SK-N-SH (cell line): ENCODE measurements at regions of chr1 and their contacts with region 1.

Region 1: GRCh38 chr1:109773146-109773899 is 9.6 kb upstream of the EPS8L3 start:
- DNase-seq: peak; percentile 86
- H3K4me3 ChIP-seq: no peak overlapping the region; a peak in 1 of 4 replicates
- H3K27ac ChIP-seq: no peak overlapping the region
- H3K4me1 ChIP-seq: peaks cover 0 to 19% of the 10 kb centered on the region in 2 experiments; a peak in 1 of 4 replicates
- H3K27me3 ChIP-seq: no peaks in the 10 kb centered on the region
- CTCF ChIP-seq: peak; percentile 92
- EP300 ChIP-seq: no peak
- RAD21 ChIP-seq: peak; percentile 98

Region 2: GRCh38 chr1:109548321-109549267 is 224.7 kb before region 1 on chr1 and contains the start of gene GNAI3:
- CTCF ChIA-PET with region 1: interaction called, 140 read pairs
- POLR2A ChIA-PET with region 1: interaction called, 15 read pairs
- DNase-seq: peak; percentile 90
- H3K4me3 ChIP-seq: peak within 1 kb of the TSS; percentile 80 to 88
- H3K27ac ChIP-seq: peak within 1 kb of the TSS; percentile 88 to 93
- H3K4me1 ChIP-seq: peaks cover 3 to 20% of the 10 kb centered on the region in 2 experiments; a peak in 3 of 4 replicates
- H3K27me3 ChIP-seq: no peaks in the 10 kb centered on the region
- CTCF ChIP-seq: no peak
- EP300 ChIP-seq: peak in 1 of 2 experiments; percentile 33; a peak in 1 of 4 replicates
- RAD21 ChIP-seq: no peak; the same call in 1 of the 2 replicates
- polyA plus RNA-seq, gene GNAI3: 4.0 and 4.8 TPM in 2 replicates

Region 3: GRCh38 chr1:109750241-109750882 is 23.0 kb before region 1 on chr1:
- CTCF ChIA-PET with region 1: interaction called, 10 read pairs
- POLR2A ChIA-PET with region 1: no interaction called
- DNase-seq: no peak
- H3K4me3 ChIP-seq: no peak overlapping the region
- H3K27ac ChIP-seq: no peak overlapping the region
- H3K4me1 ChIP-seq: no peaks in the 10 kb centered on the region
- H3K27me3 ChIP-seq: peaks cover 10% of the 10 kb centered on the region; the same call in 1 of the 2 replicates
- CTCF ChIP-seq: no peak
- EP300 ChIP-seq: no peak
- RAD21 ChIP-seq: no peak

Region 4: DNA sequence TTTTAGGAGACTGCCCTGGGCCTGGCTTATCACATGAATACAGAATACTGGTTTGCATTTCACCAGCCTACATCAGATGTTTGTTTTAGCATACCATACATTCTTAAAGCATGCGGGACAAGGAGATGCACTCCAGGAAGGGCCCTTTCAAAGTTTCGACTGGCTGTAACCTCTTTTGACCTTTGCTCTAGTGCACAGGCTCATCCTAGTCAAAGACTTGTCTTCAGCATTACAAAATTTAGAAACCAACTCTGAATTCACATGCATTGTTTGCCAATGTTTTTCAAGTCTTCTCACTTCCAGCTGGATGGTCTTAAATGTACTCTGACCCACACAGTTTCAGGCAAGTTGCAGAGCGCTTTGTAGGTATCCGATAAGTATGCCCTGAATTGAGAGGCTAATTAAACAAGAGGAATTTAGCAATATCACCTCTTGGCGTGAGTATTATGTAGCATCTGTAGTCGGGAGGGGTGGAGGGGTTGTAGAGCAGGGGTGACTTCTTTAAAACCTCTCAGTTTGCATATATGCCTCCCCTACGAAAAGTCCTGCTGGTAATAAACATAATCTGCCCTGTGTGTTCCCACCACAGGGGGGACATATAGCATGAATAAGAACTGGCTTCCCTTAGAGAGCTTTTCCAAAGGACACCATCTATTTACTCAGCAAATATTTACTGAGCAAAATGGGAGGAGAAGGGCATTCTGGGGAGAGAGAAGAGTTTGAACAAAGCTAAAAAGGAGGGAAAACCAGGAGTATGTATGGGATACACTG is 186.8 kb after region 1 on chr1:
- CTCF ChIA-PET with region 1: interaction called, 11 read pairs
- POLR2A ChIA-PET with region 1: no interaction called
- DNase-seq: no peak
- H3K4me3 ChIP-seq: no peak overlapping the region
- H3K27ac ChIP-seq: peak overlapping the region; percentile 66 to 85; a peak in 3 of 4 replicates
- H3K4me1 ChIP-seq: peaks cover 3 to 16% of the 10 kb centered on the region in 2 experiments; a peak in 2 of 4 replicates
- H3K27me3 ChIP-seq: no peaks in the 10 kb centered on the region
- CTCF ChIP-seq: peak; percentile 23; the same call in 1 of the 2 replicates
- EP300 ChIP-seq: no peak
- RAD21 ChIP-seq: no peak

Region 5: DNA sequence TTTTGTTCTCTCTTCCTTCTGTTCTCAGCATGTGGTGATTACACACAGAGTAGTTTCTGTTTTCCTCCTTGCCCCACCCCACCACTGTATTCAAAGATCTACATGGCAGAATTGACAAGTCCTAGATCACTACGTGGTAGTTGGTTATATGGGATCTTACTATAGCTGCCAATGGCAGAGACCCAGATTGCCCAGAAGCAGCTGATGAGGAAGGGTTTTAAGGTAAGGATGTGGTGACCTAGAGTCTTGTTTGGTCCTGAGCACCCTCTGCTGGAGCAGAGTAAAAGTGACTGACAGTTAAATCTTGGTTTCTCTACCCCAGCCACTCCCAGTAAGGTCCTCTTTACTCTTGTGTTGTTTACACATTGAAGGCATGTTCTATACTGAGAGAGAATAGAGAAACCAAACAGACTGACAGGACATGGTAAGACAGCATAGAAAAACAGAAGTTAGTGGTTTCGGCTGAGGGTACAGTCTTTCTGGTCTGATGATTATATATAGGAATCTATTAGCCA is 238.3 kb after region 1 on chr1:
- CTCF ChIA-PET with region 1: interaction called, 46 read pairs
- POLR2A ChIA-PET with region 1: interaction called, 4 read pairs
- DNase-seq: peak; percentile 47
- H3K4me3 ChIP-seq: no peak overlapping the region
- H3K27ac ChIP-seq: peak overlapping the region in 1 of 2 experiments; percentile 92; a peak in 2 of 4 replicates
- H3K4me1 ChIP-seq: peaks cover 0 to 26% of the 10 kb centered on the region in 2 experiments; a peak in 2 of 4 replicates
- H3K27me3 ChIP-seq: no peaks in the 10 kb centered on the region
- CTCF ChIP-seq: peak; percentile 69
- EP300 ChIP-seq: no peak
- RAD21 ChIP-seq: peak; percentile 73